ENCODE measurements at regions of chr6 and their contacts with region 1.

Region 1: DNA sequence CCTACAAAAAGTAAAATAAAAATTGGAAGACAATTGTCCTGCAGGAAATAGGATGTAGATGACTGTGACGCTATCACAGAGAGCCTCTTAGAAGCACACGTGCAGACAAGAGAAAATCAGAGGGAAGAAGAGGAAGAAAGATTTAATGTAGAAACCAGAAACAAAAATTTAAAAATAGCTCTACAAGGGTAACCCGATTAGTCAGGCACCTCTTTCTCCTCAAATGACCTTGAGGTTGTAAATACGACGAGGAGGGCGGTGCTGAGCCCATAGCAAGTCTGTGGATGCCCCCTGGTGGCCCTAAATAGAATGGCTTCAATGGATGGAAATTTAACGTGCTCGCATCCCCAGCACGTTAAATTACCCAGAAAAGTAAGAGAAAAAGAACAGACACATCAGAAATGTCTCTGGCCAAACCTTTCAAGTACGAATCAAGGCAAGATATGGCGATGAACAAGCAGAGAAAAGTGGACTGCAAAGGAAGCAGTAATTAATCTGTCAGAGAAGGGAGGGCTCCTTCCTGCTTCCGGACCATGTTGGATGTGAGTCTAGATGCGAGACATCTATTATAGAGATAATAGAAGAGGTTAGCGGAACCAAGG is 4.2 kb upstream of the PRPH2 start:
- H3K4me3 ChIP-seq: no peak overlapping the region
- H3K27ac ChIP-seq: no peak overlapping the region
- H3K4me1 ChIP-seq: peaks cover 5% of the 10 kb centered on the region
- CTCF ChIP-seq: peak; percentile 89

Region 2: DNA sequence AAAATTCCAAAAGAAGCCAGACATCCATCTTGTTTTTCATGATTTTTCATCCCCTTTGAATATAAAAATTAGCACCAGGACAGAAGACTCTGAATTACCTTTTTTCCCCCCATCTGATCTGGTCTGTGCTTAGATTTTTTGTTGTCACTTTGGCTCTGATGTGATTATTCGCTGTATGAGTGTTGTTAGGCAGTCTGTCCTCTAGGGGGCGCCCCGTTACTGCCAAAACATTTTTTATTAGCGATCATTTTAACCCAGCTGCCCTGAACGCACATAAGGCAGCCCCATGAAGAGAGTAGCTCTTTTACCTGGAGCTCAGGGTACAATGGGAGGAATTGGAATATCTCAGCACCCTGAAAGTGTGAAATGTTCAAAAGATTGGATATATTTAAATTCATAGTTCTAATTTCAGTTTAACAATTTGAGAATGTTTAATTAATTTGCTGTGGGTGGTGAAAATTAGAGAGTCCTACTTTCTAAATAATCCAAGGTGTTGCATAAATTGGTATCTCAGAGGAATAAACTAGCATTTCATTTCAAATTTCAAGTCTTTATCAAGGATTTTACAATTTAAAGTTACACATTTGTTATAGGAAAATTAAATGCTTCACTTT is 64.9 kb before region 1 on chr6:
- CTCF ChIA-PET with region 1: interaction called, 127 read pairs
- POLR2A ChIA-PET with region 1: interaction called, 4 read pairs
- H3K4me3 ChIP-seq: no peak overlapping the region
- H3K27ac ChIP-seq: no peak overlapping the region
- H3K4me1 ChIP-seq: no peaks in the 10 kb centered on the region
- CTCF ChIP-seq: peak; percentile 47; the same call in 1 of the 2 replicates

Region 3: DNA sequence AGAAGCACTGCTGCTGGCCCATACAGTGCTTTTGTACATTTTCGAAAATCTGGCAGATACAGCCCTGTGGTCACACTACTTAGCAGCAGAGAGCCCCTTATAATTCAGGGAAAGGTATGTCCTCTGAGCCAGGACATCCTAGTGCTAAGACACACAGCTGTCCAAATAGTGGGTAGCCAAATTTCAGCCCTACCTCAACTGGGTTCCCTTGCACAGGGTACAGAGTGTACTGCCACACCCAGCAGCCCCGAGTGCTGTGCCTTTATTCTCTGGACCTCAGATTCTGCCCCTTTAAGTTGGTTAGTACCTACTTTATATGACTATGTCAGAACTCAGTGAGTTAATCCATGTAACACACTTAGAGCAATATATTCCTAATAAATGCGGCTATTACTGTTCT is 51.8 kb before region 1 on chr6:
- CTCF ChIA-PET with region 1: interaction called, 15 read pairs
- POLR2A ChIA-PET with region 1: no interaction called
- H3K4me3 ChIP-seq: no peak overlapping the region
- H3K27ac ChIP-seq: no peak overlapping the region
- H3K4me1 ChIP-seq: peaks cover 8% of the 10 kb centered on the region; the same call in 1 of the 2 replicates
- CTCF ChIP-seq: no peak

Region 4: DNA sequence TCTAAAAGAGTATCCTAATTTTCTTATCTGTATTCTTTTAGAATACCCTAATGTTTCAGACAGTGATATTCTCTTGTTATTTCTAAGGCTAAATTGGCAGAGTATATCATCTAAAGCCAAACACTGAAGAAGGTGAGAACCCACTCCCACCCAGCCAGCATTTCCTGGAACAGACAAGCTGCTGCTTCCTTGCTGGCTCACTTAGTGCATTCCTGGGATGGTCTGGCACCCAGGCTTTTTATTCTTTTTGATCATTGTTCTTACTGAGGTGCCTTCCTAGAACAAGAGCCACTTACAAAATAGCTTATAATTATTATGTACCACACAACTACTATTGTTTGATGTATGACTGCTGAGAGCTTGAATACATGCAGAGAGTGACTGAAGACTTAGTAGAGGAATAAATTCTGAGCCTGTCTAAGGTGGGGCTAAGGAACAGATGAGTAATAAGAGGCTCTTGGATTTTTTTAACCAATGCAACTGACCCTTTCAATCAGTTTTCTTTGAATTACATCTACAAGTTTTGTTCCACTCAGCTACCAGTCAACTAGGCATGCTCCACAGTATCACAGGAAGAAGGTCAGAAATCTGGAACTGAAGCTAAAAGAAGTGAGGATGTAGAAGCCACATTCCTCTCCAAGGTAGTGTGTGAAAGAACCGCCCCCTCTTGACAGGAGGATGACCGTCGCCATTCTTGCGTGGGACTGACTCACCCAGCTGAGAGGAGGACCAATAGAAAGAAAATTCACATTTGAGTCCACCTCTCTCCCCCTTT is 34.3 kb before region 1 on chr6:
- CTCF ChIA-PET with region 1: interaction called, 15 read pairs
- POLR2A ChIA-PET with region 1: no interaction called
- H3K4me3 ChIP-seq: no peak overlapping the region
- H3K27ac ChIP-seq: no peak overlapping the region
- H3K4me1 ChIP-seq: no peaks in the 10 kb centered on the region
- CTCF ChIP-seq: no peak

Region 5: GRCh38 chr6:42702200-42702599 is 24.4 kb before region 1 on chr6:
- CTCF ChIA-PET with region 1: interaction called, 11 read pairs
- POLR2A ChIA-PET with region 1: no interaction called
- H3K4me3 ChIP-seq: no peak overlapping the region
- H3K27ac ChIP-seq: no peak overlapping the region
- H3K4me1 ChIP-seq: no peaks in the 10 kb centered on the region
- CTCF ChIP-seq: no peak

Region 6: DNA sequence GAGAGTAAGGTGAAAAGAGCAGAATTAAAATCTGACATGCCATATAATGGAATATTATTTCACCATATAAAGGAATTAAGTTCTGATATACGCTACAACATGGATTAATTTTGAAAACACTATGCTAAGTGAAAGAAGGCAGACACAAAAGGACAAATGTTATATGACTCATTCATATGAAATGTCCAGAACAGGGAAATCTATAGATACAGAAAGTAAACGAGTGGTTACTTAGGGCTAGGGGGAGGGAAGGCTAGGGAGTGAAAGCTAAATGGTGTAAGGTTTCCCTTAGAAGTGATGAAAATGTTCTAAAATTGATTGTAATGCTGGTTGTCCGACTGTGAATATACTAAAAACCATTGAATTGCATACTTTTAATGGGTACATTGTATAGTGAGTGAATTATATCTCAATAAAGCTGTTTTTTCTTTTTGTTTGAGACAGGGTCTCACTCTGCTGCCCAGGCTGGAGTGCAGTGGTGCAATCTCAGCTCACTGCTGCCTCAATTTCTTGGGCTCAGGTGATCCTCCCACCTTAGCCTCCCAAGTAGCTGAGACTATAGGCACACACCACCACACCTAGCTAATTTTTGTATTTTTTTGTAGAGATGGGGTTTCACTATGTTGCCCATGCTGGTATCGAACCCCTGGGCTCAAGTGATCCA is 12.4 kb before region 1 on chr6:
- CTCF ChIA-PET with region 1: interaction called, 14 read pairs
- POLR2A ChIA-PET with region 1: no interaction called
- H3K4me3 ChIP-seq: no peak overlapping the region
- H3K27ac ChIP-seq: no peak overlapping the region
- H3K4me1 ChIP-seq: no peaks in the 10 kb centered on the region
- CTCF ChIP-seq: no peak

Region 7: DNA sequence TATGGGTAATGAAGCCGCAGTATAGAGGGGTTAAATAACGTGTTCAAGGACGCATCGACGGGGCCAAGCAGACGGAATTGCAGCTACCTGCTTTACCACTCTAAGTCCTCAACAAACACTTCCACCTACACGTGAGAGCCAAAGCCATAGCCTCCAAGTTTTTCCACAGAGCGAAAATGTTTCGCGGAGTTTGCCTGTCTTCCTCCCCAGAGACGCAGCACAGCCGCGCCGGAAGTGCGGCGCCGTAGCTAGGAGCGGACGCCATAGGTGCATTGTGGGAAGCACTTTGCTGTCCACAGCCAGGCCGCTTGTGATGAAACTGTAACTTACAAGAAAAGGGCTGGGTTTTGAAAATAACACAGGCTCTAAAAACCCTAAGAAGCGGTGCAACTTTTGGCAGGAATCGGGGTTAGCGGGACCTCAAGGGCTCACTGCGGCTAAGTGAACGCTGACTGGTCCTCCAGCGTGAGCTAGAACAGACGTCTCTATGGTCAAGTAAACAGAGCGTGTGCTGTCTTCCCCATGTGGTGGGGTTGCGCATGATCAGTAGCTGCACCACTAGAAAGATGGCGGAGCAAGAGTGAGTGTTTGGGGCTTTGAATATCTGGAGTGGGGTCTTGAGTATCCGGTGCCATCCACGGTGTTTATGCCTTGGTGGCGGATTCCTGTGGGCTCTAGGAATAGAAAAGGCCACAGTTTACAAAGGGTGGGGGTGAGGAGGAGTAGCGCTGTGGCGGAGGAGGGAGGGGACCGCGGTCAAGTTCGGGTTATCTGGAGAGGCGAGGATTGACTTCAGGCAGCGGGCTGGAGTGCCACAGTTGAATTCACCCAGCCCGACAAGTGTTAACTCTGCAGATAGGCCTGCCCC is 153.0 kb after region 1 on chr6 and contains the start of gene RPL7L1:
- CTCF ChIA-PET with region 1: interaction called, 22 read pairs
- POLR2A ChIA-PET with region 1: interaction called, 4 read pairs
- H3K4me3 ChIP-seq: peak within 1 kb of the TSS; percentile 95
- H3K27ac ChIP-seq: peak within 1 kb of the TSS; percentile 99
- H3K4me1 ChIP-seq: no peaks in the 10 kb centered on the region
- CTCF ChIP-seq: peak; percentile 63